Activated T-helper 1 cell treated with anti-CD3 and anti-CD28 coated beads, Interleukin-12 subunit alpha, Interleukin-12 subunit beta, Interleukin-2, Interleukin-4 antibody, amounts not matched to agents 30 ng/mL and 10 ng/mL and 1 ng/mL, durations not matched to agents 14 hours and 24 hours and 36 hours (primary cell): ENCODE measurements at regions of chr11 and their contacts with region 1.

Region 1: DNA sequence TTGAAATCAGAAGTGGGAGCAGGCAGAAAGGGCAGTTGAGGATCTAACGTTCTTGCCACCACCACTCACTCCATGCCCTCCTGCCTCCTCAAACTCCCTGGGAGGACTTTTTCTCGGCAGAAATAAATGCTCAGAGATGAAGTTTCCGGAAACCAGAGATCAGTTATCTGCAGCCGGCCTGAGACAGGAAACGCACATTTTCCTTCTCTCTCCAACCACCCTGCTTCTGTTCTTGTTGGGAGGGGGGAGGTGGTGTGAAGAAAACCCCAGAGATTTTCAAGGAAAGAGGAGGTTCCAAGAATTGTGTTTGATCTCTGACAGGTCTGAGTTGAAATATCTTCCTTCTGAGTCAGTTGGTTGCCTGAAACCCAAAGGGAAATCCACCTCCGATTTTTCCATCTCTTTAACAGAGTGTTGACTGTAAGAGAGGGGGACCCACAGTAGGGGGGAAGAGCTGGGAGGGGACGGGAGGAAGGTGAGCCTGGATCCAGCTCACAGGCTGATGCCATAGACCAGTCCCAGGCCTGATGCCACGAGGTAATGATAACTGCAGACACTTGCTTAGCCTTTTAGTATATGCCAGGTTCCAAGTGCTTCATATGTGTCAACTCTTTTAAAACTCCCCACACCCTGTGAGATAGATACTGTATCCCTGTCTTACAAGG is 100.8 kb downstream of the TRAF6 start:
- DNase-seq: peak; percentile 49
- H3K4me3 Mint-ChIP-seq: peak overlapping the region; percentile 69
- H3K27ac Mint-ChIP-seq: peak overlapping the region; percentile 94
- H3K4me1 Mint-ChIP-seq: peaks cover 80% of the 10 kb centered on the region
- H3K27me3 Mint-ChIP-seq: no peaks in the 10 kb centered on the region

Region 2: DNA sequence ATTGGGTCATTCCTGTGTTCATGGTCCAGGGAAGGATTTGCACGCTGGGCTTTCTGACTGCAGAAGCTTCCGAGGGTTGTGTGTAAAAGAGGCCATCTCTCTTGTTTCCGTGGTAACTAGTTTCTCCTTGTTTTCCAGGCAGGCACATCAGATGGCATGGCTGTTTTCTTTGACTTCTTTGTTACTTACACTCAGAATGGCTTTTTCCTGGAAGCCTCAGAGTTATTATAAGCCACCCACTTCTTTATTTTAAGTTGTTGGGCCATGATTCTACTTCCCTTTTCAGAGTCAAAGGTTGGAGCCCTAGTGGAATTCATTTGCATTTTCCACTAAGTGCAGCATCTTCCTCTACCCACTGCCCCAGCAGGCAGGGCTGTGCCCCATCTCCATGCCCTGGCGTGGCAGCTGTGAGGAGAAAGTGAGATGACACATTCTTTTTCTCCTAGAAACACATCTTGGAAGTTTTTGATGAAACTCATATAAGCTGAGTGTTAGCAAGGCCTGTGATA is 18.3 kb before region 1 on chr11:
- intact Hi-C with region 1: loop called (anchors 1 kb)
- DNase-seq: no peak
- H3K4me3 Mint-ChIP-seq: peak overlapping the region; percentile 40
- H3K27ac Mint-ChIP-seq: peak overlapping the region; percentile 66
- H3K4me1 Mint-ChIP-seq: peaks cover 86% of the 10 kb centered on the region
- H3K27me3 Mint-ChIP-seq: no peaks in the 10 kb centered on the region